Prostate gland (tissue), 2 donors: ENCODE measurements at regions of chr4 and their contacts with region 1.

Region 1: GRCh38 chr4:169810325-169811323 is 52.9 kb upstream of the HPF1 start:
- DNase-seq: peak; percentile 66
- H3K4me3 ChIP-seq: no peak overlapping the region
- H3K27ac ChIP-seq: no peak overlapping the region
- H3K4me1 ChIP-seq: no peaks in the 10 kb centered on the region
- H3K27me3 ChIP-seq: no peaks in the 10 kb centered on the region
- CTCF ChIP-seq: peak; percentile 74 to 85 (median 82)
- POLR2A ChIP-seq: no peak

Region 2: GRCh38 chr4:169446824-169447223 is 363.8 kb before region 1 on chr4:
- intact Hi-C with region 1: no loop called
- DNase-seq: no peak
- H3K4me3 ChIP-seq: no peak overlapping the region
- H3K27ac ChIP-seq: no peak overlapping the region
- H3K4me1 ChIP-seq: no peaks in the 10 kb centered on the region
- H3K27me3 ChIP-seq: no peaks in the 10 kb centered on the region
- CTCF ChIP-seq: no peak
- POLR2A ChIP-seq: no peak

Region 3: DNA sequence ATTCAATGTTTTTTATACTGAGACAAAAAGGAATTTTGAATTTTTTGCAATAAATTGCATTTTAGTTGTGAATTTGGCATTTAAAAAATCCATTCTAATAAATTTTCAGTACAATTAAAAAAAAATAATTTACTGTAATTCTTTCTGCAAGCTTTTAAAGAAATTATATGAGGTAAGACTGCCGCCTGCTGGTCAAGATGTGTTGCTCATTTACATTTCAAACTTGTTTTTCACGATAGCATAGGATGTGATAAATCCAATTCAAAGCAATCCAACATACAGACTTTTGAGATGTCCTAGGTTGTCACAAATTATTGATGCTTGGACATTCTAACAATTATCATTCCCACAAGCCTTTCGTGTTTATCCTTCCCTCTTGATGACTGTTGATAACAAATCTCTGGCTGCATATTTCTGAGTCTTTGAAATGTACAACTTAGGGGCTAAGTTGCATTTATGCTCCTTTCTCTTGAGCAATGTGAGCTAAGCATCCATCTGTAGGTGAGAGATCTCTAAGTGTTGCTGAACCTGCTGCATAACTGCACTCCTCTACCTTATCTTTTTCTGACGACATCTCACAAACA is 237.2 kb after region 1 on chr4:
- intact Hi-C with region 1: loop called (anchors 5 kb)
- DNase-seq: peak; percentile 60
- H3K4me3 ChIP-seq: no peak overlapping the region
- H3K27ac ChIP-seq: no peak overlapping the region
- H3K4me1 ChIP-seq: no peaks in the 10 kb centered on the region
- H3K27me3 ChIP-seq: no peaks in the 10 kb centered on the region
- CTCF ChIP-seq: peak; percentile 59 to 89 (median 82)
- POLR2A ChIP-seq: no peak

Region 4: GRCh38 chr4:170226288-170226687 is 415.7 kb after region 1 on chr4:
- intact Hi-C with region 1: no loop called
- DNase-seq: no peak
- H3K4me3 ChIP-seq: no peak overlapping the region
- H3K27ac ChIP-seq: no peak overlapping the region
- H3K4me1 ChIP-seq: no peaks in the 10 kb centered on the region
- H3K27me3 ChIP-seq: peaks cover 2% of the 10 kb centered on the region
- CTCF ChIP-seq: no peak
- POLR2A ChIP-seq: no peak